Naive thymus-derived CD4-positive, alpha-beta T cell (primary cell): ENCODE measurements at regions of chr1 and their contacts with region 1.

Region 1: DNA sequence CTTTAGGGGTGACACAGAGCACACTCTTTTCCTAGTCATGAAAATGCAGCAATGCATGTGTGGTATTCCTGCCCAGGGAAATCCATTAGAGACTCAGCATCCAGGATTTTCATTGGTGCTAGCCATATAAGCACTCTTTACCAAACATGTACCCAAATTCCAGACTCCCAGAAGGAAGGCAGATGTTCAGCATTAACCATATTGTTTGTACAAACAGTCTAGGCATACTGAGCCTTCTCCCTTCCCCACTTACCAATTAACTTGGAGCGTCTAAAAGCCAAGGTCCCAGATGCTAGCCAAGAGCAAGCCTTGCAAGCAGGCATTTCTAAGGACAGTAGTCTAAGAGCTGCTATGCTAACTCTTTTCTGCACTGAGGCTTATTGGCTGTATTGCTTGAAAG is 27.9 kb downstream of the ZBED6 start:
- DNase-seq: no peak
- ATAC-seq: no peak
- H3K4me3 ChIP-seq: no peak overlapping the region
- H3K4me3 Mint-ChIP-seq: no peak overlapping the region
- H3K27ac ChIP-seq: no peak overlapping the region
- H3K27ac Mint-ChIP-seq: no peak overlapping the region
- H3K4me1 ChIP-seq: no peaks in the 10 kb centered on the region
- H3K4me1 Mint-ChIP-seq: peaks cover 16 to 40% (median 26%) of the 10 kb centered on the region in 7 donors
- H3K27me3 ChIP-seq: no peaks in the 10 kb centered on the region
- H3K27me3 Mint-ChIP-seq: no peaks in the 10 kb centered on the region

Region 2: GRCh38 chr1:203873094-203873493 is 49.8 kb after region 1 on chr1:
- CTCF ChIA-PET with region 1: interaction called, 10 read pairs
- POLR2A ChIA-PET with region 1: no interaction called
- intact Hi-C with region 1: no loop called
- DNase-seq: no peak
- ATAC-seq: no peak
- H3K4me3 ChIP-seq: no peak overlapping the region
- H3K4me3 Mint-ChIP-seq: no peak overlapping the region
- H3K27ac ChIP-seq: no peak overlapping the region
- H3K27ac Mint-ChIP-seq: peak overlapping the region in 2 of 9 donors; percentile 18 to 69
- H3K4me1 ChIP-seq: no peaks in the 10 kb centered on the region
- H3K4me1 Mint-ChIP-seq: peaks cover 0 to 6% (median 0%) of the 10 kb centered on the region in 7 donors
- H3K27me3 ChIP-seq: no peaks in the 10 kb centered on the region
- H3K27me3 Mint-ChIP-seq: no peaks in the 10 kb centered on the region

Region 3: GRCh38 chr1:204304067-204304466 is 480.8 kb after region 1 on chr1:
- CTCF ChIA-PET with region 1: no interaction called
- POLR2A ChIA-PET with region 1: no interaction called
- intact Hi-C with region 1: no loop called
- DNase-seq: no peak
- ATAC-seq: no peak
- H3K4me3 ChIP-seq: no peak overlapping the region
- H3K4me3 Mint-ChIP-seq: no peak overlapping the region
- H3K27ac ChIP-seq: no peak overlapping the region
- H3K27ac Mint-ChIP-seq: no peak overlapping the region
- H3K4me1 ChIP-seq: no peaks in the 10 kb centered on the region
- H3K4me1 Mint-ChIP-seq: no peaks in the 10 kb centered on the region
- H3K27me3 ChIP-seq: no peaks in the 10 kb centered on the region
- H3K27me3 Mint-ChIP-seq: peaks cover 4 to 32% (median 14%) of the 10 kb centered on the region in 5 donors